Activated CD4-positive, alpha-beta memory T cell treated with anti-CD3 and anti-CD28 coated beads for 36 hours (primary cell): ENCODE measurements at regions of chr14 and their contacts with region 1.

Region 1: GRCh38 chr14:33950320-33951182 is at the start of gene EGLN3:
- DNase-seq: peak; percentile 73
- H3K4me3 Mint-ChIP-seq: peak within 1 kb of the TSS; percentile 76
- H3K27ac Mint-ChIP-seq: no peak within 1 kb of the TSS
- H3K4me1 Mint-ChIP-seq: peaks cover 17% of the 10 kb centered on the region
- H3K27me3 Mint-ChIP-seq: peaks cover 42% of the 10 kb centered on the region
- total RNA-seq, gene EGLN3: 1.2 to 1.9 TPM

Region 2: GRCh38 chr14:33917661-33918060 is 32.9 kb before region 1 on chr14:
- CTCF ChIA-PET with region 1: no interaction called
- POLR2A ChIA-PET with region 1: interaction called, 10 read pairs
- intact Hi-C with region 1: no loop called
- DNase-seq: no peak
- H3K4me3 Mint-ChIP-seq: no peak overlapping the region
- H3K27ac Mint-ChIP-seq: no peak overlapping the region
- H3K4me1 Mint-ChIP-seq: no peaks in the 10 kb centered on the region
- H3K27me3 Mint-ChIP-seq: no peaks in the 10 kb centered on the region